HCT116 (cell line): ENCODE measurements at regions of chr9 and their contacts with region 1.

Region 1: GRCh38 chr9:77063645-77064285 is 44.3 kb downstream of the FOXB2 start:
- DNase-seq: peak; percentile 10
- ATAC-seq: peak; percentile 76
- H3K4me3 ChIP-seq: no peak overlapping the region
- H3K27ac ChIP-seq: no peak overlapping the region
- H3K4me1 ChIP-seq: peaks cover 0 to 6% of the 10 kb centered on the region in 2 experiments; a peak in 1 of 4 replicates
- H3K27me3 ChIP-seq: no peaks in the 10 kb centered on the region; the same call in 1 of the 2 replicates
- CTCF ChIP-seq: no peak
- POLR2A ChIP-seq: no peak
- RAD21 ChIP-seq: no peak

Region 2: DNA sequence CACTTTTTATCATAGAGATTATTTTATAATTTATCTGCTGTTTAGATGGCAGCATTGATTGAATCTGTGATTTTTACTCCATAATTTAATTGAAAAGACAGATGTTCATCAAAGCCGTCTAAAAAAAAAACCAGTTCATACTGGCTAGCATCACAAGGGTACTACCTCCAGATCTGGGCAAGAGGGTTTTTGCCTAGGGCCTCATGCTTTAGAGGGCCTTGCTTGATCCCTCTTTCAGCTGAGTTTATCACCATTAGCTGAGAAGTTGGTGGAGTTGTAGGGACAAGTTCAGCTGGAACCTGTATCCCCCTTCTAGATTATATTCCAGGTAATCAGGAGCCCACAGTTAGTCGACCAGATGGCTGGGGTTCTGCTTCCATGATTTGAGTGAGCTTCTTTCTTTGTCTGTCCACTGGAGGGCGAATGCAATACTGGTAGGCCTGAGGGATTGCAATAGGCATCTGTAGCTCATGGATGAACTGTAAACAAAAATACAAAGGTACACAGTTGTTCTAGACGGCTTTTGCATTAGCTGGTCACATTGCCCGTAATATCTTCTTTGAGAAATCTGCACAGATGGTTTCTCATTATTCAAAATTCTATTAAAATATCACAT is 1084.5 kb before region 1 on chr9:
- CTCF ChIA-PET with region 1: no interaction called
- POLR2A ChIA-PET with region 1: no interaction called
- RAD21 ChIA-PET with region 1: no interaction called
- intact Hi-C with region 1: no loop called
- DNase-seq: no peak
- ATAC-seq: peak; percentile 66; the same call in 1 of the 2 replicates
- H3K4me3 ChIP-seq: no peak overlapping the region
- H3K27ac ChIP-seq: no peak overlapping the region
- H3K4me1 ChIP-seq: no peaks in the 10 kb centered on the region
- H3K27me3 ChIP-seq: no peaks in the 10 kb centered on the region
- CTCF ChIP-seq: peak; percentile 8 to 52 (median 49); a peak in 4 of 6 replicates
- POLR2A ChIP-seq: no peak
- RAD21 ChIP-seq: peak; percentile 33; the same call in 1 of the 2 replicates

Region 3: GRCh38 chr9:77011973-77012821 is 51.6 kb before region 1 on chr9:
- CTCF ChIA-PET with region 1: no interaction called
- POLR2A ChIA-PET with region 1: no interaction called
- RAD21 ChIA-PET with region 1: no interaction called
- intact Hi-C with region 1: loop called (anchors 5 kb)
- DNase-seq: peak; percentile 38
- ATAC-seq: peak; percentile 95
- H3K4me3 ChIP-seq: peak overlapping the region; percentile 31 to 51
- H3K27ac ChIP-seq: no peak overlapping the region
- H3K4me1 ChIP-seq: peaks cover 4 to 11% of the 10 kb centered on the region in 2 experiments; a peak in 3 of 4 replicates
- H3K27me3 ChIP-seq: no peaks in the 10 kb centered on the region
- CTCF ChIP-seq: peak; percentile 55 to 81 (median 74); a peak in 5 of 6 replicates
- POLR2A ChIP-seq: no peak
- RAD21 ChIP-seq: peak; percentile 69

Region 4: DNA sequence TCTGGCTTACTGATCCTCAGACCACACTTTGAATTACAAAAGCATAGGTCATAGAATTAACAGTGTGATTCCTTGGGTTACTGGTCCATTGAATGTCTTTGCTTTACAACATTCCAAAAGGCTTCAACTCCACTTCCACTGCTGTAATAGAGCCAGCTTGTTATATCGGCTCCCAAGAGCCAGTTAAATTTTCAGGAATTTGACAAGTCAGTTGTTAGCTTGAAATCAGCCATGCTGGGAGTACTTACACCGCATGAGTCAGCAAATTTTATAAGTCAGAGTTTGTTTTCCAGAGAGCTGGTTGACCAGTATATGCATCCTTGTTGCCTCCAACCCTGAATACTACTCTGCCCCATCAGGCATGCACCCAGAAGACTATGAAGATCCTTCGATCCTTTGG is 28.8 kb after region 1 on chr9:
- CTCF ChIA-PET with region 1: no interaction called
- POLR2A ChIA-PET with region 1: no interaction called
- RAD21 ChIA-PET with region 1: no interaction called
- intact Hi-C with region 1: loop called (anchors 2 kb)
- DNase-seq: no peak
- ATAC-seq: no peak
- H3K4me3 ChIP-seq: no peak overlapping the region
- H3K27ac ChIP-seq: no peak overlapping the region
- H3K4me1 ChIP-seq: no peaks in the 10 kb centered on the region
- H3K27me3 ChIP-seq: no peaks in the 10 kb centered on the region
- CTCF ChIP-seq: no peak
- POLR2A ChIP-seq: no peak
- RAD21 ChIP-seq: no peak

Region 5: GRCh38 chr9:77402286-77402685 is 338.5 kb after region 1 on chr9:
- CTCF ChIA-PET with region 1: no interaction called
- POLR2A ChIA-PET with region 1: no interaction called
- RAD21 ChIA-PET with region 1: no interaction called
- intact Hi-C with region 1: no loop called
- DNase-seq: no peak
- ATAC-seq: no peak
- H3K4me3 ChIP-seq: no peak overlapping the region
- H3K27ac ChIP-seq: no peak overlapping the region
- H3K4me1 ChIP-seq: no peaks in the 10 kb centered on the region
- H3K27me3 ChIP-seq: no peaks in the 10 kb centered on the region
- CTCF ChIP-seq: no peak
- POLR2A ChIP-seq: no peak
- RAD21 ChIP-seq: no peak